ENCODE measurements at regions of chr12 and their contacts with region 1.

Region 1: DNA sequence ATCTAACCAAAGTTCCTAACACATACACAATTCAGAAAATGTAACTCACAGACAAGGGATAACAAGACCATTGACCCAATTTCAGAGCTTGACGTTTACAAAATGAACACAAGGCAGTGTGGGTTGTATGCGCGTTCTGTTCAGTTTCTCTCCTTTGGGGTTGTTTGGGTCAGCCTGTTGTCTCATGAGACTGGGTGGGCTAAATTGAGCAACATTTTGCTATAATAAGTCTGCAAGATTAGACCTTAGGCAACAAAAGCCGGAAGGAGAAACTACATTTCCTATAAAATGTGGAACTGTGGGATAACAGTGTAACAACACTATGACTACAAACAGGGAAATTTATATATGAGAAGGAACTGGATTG is 18.8 kb upstream of the LTA4H start:
- DNase-seq: no peak
- ATAC-seq: peak; percentile 44 to 74

Region 2: GRCh38 chr12:95633049-95633545 is 421.1 kb before region 1 on chr12:
- intact Hi-C with region 1: no loop called
- DNase-seq: peak; percentile 32
- ATAC-seq: peak in 1 of 2 donors; percentile 86

Region 3: DNA sequence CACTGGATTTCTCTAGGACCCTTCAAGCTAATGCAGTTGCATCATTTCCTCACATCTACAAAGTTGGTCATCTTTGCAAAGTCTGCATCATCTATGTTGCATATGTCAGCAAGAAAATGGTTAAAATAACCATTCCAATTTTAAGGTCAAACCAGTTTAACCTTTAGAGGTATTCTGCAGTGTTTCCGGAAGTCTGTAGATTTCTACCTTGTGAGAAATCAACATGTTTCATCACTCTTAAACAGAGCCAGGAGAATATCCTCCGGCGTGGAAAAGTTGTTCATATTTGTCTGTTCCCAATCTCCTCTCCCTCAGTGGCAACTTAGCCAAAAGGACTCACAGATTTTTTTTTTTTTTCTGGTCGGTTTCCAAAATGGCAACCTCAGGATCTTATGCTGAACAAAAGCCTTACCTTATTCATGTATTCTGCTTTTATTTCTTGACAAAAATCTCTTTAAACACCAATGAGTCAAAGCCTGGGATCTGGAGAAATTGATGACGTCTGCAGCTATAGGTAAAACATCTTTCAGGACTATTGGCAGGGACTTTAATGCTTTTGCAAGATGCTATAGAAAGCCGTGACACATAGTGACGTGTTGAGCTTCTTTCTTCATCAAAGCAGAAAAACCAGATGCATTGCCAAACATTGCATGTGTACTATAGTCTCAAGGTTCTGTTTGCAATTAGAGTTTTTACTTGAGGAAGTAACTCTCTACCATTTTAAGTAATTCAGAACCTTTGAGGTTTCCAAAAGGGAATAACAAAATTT is 362.0 kb after region 1 on chr12:
- intact Hi-C with region 1: loop called in 1 of 2 experiments (anchors 10 kb)
- DNase-seq: no peak
- ATAC-seq: no peak

Measured in left cardiac atrium (tissue), 4 donors.